ENCODE measurements at regions of chr12 and their contacts with region 1.

Region 1: DNA sequence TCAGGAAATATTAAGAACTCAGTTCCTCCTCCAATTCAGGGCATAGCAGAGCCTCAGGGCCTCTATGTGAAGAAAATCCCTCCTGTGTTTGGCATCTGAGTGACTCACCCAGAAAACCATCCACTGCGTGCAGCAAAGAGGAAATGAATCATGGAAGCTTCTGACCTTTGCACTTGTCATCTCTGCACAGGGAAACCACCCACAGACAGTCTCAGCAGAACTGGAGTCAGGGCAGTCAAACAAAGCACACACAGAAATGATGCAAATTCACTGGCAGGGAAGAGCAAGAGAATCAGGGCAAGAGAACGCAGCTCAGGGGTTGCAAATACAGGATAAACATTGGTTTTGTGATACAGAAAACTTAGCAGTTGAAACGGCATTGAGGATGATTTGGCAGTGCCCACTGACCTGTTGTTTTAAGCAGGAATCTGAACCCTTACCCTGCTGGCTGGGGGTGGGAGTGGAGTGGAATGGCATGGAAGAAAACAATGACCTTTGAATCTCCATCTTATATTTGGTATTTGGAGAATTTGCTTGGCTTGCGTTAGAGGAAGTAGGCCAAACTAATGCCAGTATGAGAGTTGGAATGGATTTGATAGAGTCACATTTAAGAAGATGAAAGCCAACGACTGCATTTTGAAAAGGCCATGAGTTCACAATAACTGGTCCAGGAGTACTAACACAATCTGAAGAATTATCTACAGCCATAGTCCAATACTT is 53.5 kb downstream of the PHLDA1 start:
- DNase-seq: peak; percentile 82
- H3K4me3 Mint-ChIP-seq: peak overlapping the region; percentile 67
- H3K27ac Mint-ChIP-seq: peak overlapping the region; percentile 96
- H3K4me1 Mint-ChIP-seq: peaks cover 64% of the 10 kb centered on the region
- H3K27me3 Mint-ChIP-seq: no peaks in the 10 kb centered on the region

Region 2: GRCh38 chr12:75480469-75480949 is 497.6 kb before region 1 on chr12 and contains the start of gene GLIPR1:
- intact Hi-C with region 1: loop called (anchors 2 kb)
- DNase-seq: peak; percentile 64
- H3K4me3 Mint-ChIP-seq: peak within 1 kb of the TSS; percentile 87
- H3K27ac Mint-ChIP-seq: peak within 1 kb of the TSS; percentile 92
- H3K4me1 Mint-ChIP-seq: peaks cover 73% of the 10 kb centered on the region
- H3K27me3 Mint-ChIP-seq: peaks cover 1% of the 10 kb centered on the region
- total RNA-seq, gene GLIPR1: 7.4 and 7.6 TPM in 2 replicates

Region 3: DNA sequence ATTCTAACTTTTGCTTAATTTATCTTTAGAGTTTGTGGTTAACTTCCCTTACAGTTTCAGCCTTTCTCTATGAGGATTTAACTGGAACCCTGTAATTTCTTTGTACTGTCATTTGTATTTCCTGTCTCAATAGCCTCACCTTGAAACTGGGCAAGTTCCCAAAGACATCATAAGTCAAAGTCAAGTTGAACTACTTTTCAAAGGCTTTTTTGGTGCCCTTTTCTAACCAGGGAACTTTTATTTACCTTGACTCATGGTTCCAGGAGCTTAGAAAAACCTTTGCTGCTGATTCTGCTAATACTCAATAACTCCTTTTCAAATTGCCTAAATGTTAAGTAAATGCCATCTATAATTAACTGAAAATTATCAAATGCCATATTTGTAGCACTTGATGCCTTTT is 265.9 kb before region 1 on chr12:
- intact Hi-C with region 1: loop called (anchors 5 kb)
- DNase-seq: no peak
- H3K4me3 Mint-ChIP-seq: no peak overlapping the region
- H3K27ac Mint-ChIP-seq: no peak overlapping the region
- H3K4me1 Mint-ChIP-seq: peaks cover 26% of the 10 kb centered on the region
- H3K27me3 Mint-ChIP-seq: peaks cover 12% of the 10 kb centered on the region

Region 4: DNA sequence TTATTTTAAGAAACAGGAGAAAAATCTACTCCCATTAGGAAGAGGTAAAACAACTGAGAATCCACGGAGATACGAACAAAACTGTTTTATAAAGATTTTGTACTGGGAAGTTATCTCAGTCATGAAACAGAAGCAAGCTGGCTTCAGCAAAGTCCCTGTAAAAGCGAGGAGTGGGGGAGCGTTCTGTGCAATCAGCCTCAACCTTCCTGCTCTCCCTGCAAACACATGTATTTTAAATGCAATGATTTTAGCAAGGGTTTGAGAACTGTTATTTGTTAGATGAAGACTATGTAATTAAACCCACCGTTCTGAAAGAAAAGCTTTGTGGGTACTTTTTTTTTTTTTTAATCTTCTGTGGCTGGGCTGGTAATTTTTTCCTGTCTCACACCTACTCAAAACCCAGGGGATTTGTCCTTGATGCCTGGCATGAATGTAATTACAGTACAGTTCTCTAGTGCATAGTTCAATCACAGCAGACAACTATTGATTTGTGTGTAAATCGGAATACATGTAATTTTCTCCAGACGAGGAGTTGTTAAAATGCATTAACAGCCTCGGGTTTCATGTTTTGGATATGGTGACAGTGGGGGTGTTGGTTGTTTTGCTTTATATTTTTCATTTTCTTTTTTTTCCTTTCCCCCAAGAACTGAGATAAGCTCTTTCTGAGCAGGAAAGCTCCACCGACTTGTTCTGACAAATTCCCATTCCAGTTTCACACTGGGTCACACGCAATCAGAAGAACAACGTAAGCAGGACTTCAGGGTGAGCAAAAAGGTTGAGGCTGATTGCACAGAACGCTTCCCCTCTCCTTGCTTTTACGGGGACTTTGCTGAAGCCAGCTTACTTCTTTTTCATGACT is 100.1 kb before region 1 on chr12:
- intact Hi-C with region 1: no loop called
- DNase-seq: no peak
- H3K4me3 Mint-ChIP-seq: no peak overlapping the region
- H3K27ac Mint-ChIP-seq: no peak overlapping the region
- H3K4me1 Mint-ChIP-seq: peaks cover 22% of the 10 kb centered on the region
- H3K27me3 Mint-ChIP-seq: peaks cover 33% of the 10 kb centered on the region

Region 5: GRCh38 chr12:75933101-75933500 is 45.0 kb before region 1 on chr12:
- intact Hi-C with region 1: loop called (anchors 1 kb)
- DNase-seq: no peak
- H3K4me3 Mint-ChIP-seq: no peak overlapping the region
- H3K27ac Mint-ChIP-seq: peak overlapping the region; percentile 73
- H3K4me1 Mint-ChIP-seq: peaks cover 44% of the 10 kb centered on the region
- H3K27me3 Mint-ChIP-seq: no peaks in the 10 kb centered on the region

Region 6: GRCh38 chr12:75954041-75954440 is 24.1 kb before region 1 on chr12:
- intact Hi-C with region 1: loop called (anchors 1 kb)
- DNase-seq: no peak
- H3K4me3 Mint-ChIP-seq: no peak overlapping the region
- H3K27ac Mint-ChIP-seq: no peak overlapping the region
- H3K4me1 Mint-ChIP-seq: peaks cover 25% of the 10 kb centered on the region
- H3K27me3 Mint-ChIP-seq: no peaks in the 10 kb centered on the region

Region 7: GRCh38 chr12:76020731-76021672 is 42.9 kb after region 1 on chr12:
- intact Hi-C with region 1: loop called (anchors 1 kb)
- DNase-seq: peak; percentile 67
- H3K4me3 Mint-ChIP-seq: peak overlapping the region; percentile 66
- H3K27ac Mint-ChIP-seq: peak overlapping the region; percentile 99
- H3K4me1 Mint-ChIP-seq: peaks cover 60% of the 10 kb centered on the region
- H3K27me3 Mint-ChIP-seq: no peaks in the 10 kb centered on the region